Cardiac septum (tissue), 1 donor: ENCODE measurements at regions of chr16 and their contacts with region 1.

Region 1: GRCh38 chr16:68040507-68041288 is 17.6 kb downstream of the DUS2 start:
- DNase-seq: peak; percentile 93

Region 2: DNA sequence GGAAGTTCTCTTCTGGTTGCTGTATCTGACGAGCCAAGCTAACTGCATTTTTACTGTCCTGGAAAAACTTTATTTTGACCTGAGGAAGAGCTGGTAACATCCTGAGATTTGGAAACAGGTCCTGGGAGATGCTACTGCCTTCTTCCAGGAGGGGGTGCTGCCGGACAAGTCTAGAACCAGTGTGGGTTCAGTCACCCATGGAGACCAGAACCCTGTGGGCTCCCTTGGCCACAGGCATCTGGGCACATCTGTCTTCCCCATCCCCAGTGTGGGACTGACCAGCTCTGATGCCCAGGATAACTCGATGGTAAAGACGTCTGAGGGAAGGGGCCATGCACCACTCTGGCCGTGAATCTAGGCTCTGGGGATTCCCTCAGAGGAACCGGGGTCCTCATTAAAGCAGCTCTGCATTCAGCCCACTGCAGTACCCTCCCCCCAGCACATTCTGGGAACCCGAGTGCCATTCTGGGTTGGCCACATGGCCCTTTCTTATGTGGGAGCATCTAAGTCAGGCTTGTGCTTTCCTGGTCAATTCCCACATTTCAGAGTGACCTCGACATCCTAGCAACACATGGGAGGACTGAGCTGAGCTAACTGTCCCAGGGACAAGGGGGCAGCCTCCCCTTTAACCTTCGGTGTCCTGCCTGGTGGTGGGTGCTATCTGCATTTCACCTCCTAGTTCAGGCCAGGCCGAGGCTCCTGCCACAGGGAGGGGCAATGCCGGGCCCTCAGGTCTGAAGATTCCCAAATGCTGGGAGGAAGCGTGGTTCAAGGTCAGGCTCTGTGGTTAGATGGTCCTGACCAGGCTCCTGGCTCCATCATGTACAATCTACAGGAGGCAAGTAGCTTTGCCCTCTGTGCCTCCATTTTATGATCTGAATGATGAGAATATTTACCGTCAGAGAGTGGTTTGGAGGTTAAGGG is 367.7 kb before region 1 on chr16:
- intact Hi-C with region 1: loop called (anchors 5 kb)
- DNase-seq: no peak

Region 3: DNA sequence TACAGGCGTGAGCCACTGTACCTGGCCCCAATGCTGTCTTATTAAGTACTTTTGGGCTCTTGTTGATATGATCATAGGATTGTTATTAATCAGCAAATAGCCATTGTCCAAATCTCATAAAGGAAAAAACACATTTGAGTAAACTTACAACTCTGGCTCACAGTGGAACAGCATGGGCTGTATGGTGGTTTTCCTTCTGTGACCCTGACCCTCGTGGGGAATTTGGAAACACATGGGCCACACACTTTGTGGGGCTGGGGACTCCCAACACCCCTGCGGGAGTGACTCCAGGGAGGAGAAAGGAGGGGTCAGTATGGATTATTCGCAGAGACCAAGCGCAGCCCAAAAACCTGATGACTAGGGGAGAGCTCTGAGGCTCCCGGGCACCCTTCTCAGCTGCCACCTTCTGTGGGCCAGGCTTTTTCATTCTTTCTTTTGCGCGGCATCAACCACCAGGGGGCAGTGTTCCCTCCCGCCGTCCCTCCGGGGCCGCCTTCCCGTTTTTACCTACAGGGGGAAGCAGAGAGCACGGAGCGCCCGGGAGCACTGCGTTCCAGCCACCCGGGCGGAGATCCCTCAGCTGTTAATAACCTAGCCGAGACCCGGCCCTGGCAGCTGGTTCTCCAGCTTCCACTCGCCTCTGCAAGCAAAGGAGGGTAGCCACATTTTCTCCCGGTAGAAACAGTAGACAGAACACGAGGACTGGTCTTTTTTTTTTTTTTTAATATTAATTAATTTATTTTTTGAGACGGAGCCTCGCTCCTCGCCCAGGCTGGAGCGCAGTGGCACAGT is 224.3 kb before region 1 on chr16:
- intact Hi-C with region 1: loop called (anchors 2 kb)
- DNase-seq: peak; percentile 96

Region 4: DNA sequence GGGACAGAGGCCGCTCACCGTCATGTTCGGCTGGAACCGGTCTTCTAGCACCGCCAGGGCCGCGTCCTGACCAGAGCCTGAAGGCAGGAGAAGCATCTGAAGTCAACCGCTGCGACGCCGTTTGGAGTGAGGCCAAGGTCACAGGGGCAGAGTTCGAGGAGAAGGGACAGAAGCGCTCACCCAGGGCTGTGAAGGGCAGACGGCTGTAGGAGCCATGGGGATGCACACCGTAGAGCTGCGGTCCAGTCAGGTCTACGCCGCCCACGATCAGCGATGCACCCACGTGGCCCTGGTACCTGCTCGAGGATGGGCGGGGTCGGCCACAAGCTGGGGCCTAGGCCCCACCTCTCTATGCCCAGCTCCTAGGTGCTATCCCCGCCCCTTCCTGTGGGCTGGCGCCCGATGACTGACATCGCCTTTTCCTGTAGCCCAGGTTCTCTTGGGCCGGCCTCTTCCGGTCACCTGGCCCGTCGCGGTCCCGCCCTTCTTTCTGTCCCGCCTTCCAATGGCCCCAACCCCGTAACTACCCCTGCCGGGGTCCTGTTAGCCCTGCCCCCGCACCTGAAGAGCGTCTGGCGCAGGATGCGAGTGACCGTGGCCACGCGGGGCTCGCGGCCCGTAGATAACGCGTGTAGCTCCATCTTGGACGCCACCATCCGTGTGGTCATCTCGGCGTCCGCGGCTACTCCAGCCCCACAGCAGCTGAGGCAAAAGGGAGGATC is 105.1 kb before region 1 on chr16:
- intact Hi-C with region 1: loop called (anchors 5 kb)
- DNase-seq: peak; percentile 98

Region 5: DNA sequence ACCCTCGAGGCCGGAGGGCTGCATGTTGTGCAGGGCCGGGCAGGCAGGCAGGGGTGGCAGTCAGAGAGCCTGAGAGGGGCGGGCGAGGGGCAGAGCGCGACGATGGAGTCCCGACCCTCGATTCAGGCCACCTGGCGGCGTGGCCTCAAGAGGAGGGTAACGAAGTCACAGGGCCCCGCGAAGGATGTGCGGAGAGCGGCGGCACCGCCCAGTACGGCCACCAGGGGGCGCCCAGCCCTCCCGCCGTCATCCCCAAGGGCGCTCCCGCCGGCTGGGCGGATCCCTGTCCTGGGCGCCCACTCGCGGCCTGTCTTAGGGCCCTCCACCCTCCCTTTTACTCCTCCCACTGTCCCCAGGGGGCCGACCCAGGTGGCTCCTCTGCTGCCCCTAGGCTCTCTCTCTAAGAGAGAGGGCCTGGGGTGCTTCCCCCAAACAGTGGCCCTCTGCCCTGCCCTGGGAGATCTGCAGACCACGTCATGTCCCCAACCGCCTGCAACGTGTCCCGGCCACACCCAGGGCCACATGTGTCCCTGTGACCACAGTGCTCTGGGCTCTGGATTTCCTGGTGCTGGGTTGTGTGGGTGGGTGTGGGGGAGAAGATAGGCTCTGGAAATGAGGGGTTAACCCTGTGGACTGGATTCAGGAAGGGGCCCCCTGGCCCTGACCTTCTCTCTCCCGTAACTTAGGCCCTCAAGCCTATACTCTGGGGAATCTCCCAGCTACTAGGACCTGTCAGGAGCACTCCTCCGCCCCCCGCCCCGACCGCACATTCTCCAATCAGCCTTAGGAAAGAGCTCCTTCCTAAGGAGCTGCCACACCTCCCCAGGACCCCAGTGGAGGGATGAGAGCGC is 47.3 kb before region 1 on chr16:
- intact Hi-C with region 1: loop called (anchors 5 kb)
- DNase-seq: peak; percentile 90

Region 6: DNA sequence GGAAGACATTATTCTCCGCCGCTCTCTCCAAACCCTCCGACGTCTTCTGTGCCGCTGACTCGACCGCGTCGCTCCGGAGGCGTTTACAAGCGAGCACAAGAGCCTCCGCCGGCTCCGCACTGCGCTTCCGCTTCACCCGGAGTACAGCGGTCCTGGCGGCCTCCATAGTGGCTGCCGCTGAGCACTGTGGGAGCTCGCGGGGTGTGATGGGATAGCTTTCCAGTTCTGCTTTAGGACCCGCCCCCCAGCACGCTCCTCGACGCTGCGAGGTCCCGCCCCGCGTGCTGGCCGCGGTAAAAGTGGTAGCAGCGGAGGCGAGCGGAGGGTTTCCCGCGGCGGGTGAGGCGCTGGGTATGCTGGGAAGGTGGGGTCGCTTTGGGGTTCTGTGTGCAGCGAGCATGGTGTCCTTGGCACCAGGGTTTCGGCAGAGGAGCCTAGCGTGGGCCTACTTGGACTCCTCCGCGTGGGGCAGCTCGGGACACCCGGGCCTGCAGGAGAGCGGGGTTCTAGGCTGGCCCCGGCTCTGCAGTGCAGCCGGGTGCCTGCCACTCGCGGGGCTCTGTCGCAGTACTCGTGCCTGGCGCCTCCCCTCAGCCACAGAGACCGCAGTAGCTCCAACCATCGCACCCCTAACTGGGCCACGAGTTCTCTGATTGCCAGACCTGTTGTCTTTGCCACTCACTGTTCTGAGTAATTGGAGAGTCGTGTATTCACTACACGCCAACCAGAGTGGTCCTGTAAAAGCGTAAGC is 270.2 kb after region 1 on chr16 and contains the starts of genes PRMT7 and SLC7A6OS:
- intact Hi-C with region 1: no loop called
- DNase-seq: peak; percentile 97
- total RNA-seq, gene PRMT7: 24.2 TPM
- total RNA-seq, gene SLC7A6OS: 14.5 TPM